ENCODE measurements at regions of chrX and their contacts with region 1.

Region 1: GRCh38 chrX:22135994-22136684 is 104.0 kb downstream of the PHEX start:
- DNase-seq: peak; percentile 79
- H3K4me3 ChIP-seq: peak overlapping the region in 1 of 3 experiments; percentile 15
- H3K27ac ChIP-seq: peak overlapping the region; percentile 94
- H3K4me1 ChIP-seq: peaks cover 37% of the 10 kb centered on the region
- H3K27me3 ChIP-seq: no peaks in the 10 kb centered on the region
- CTCF ChIP-seq: peak; percentile 49 to 72

Region 2: GRCh38 chrX:22073918-22074317 is 62.2 kb before region 1 on chrX:
- CTCF ChIA-PET with region 1: no interaction called
- dilution Hi-C with region 1: loop called (anchors 5 kb)
- in situ Hi-C with region 1: no loop called
- intact Hi-C with region 1: no loop called
- DNase-seq: peak; percentile 73
- H3K4me3 ChIP-seq: no peak overlapping the region
- H3K27ac ChIP-seq: no peak overlapping the region
- H3K4me1 ChIP-seq: peaks cover 8% of the 10 kb centered on the region
- H3K27me3 ChIP-seq: no peaks in the 10 kb centered on the region
- CTCF ChIP-seq: no peak

Region 3: DNA sequence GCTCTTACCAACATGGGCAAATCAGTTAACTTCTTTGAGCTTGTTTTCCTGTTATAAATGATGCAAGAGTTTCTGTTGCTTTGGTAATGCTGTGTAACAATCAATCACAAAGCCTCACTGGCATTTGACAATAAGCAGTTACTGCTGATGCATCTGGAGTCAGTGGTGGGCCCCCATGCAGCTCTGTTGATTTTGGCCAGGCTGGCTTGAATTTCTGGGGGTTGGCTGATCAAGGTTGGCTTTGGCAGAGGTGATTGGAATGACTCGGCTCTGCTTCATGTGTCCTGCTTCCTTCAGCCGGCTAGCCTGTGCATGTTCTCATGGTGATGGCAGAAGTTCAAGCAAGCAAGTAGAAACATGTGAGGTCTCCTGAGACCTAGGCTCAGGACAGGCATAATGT is 13.6 kb before region 1 on chrX:
- CTCF ChIA-PET with region 1: interaction called, 4 read pairs
- dilution Hi-C with region 1: no loop called
- in situ Hi-C with region 1: no loop called
- intact Hi-C with region 1: loop called (anchors 1 kb)
- DNase-seq: peak; percentile 97
- H3K4me3 ChIP-seq: no peak overlapping the region
- H3K27ac ChIP-seq: peak overlapping the region; percentile 91
- H3K4me1 ChIP-seq: peaks cover 54% of the 10 kb centered on the region
- H3K27me3 ChIP-seq: no peaks in the 10 kb centered on the region
- CTCF ChIP-seq: no peak

Region 4: GRCh38 chrX:22278374-22278773 is 142.2 kb after region 1 on chrX:
- CTCF ChIA-PET with region 1: no interaction called
- dilution Hi-C with region 1: no loop called
- in situ Hi-C with region 1: no loop called
- intact Hi-C with region 1: loop called (anchors 1 kb)
- DNase-seq: peak; percentile 19
- H3K4me3 ChIP-seq: no peak overlapping the region
- H3K27ac ChIP-seq: no peak overlapping the region
- H3K4me1 ChIP-seq: no peaks in the 10 kb centered on the region
- H3K27me3 ChIP-seq: no peaks in the 10 kb centered on the region
- CTCF ChIP-seq: peak; percentile 47 to 58

Region 5: GRCh38 chrX:22526339-22526738 is 390.2 kb after region 1 on chrX:
- CTCF ChIA-PET with region 1: no interaction called
- dilution Hi-C with region 1: no loop called
- in situ Hi-C with region 1: no loop called
- intact Hi-C with region 1: loop called (anchors 10 kb)
- DNase-seq: peak; percentile 93
- H3K4me3 ChIP-seq: no peak overlapping the region
- H3K27ac ChIP-seq: peak overlapping the region; percentile 95
- H3K4me1 ChIP-seq: peaks cover 14% of the 10 kb centered on the region
- H3K27me3 ChIP-seq: no peaks in the 10 kb centered on the region
- CTCF ChIP-seq: no peak

Region 6: GRCh38 chrX:22748093-22748999 is 612.2 kb after region 1 on chrX:
- CTCF ChIA-PET with region 1: interaction called, 9 read pairs
- dilution Hi-C with region 1: no loop called
- in situ Hi-C with region 1: no loop called
- intact Hi-C with region 1: loop called (anchors 1 kb)
- DNase-seq: peak; percentile 25
- H3K4me3 ChIP-seq: no peak overlapping the region
- H3K27ac ChIP-seq: no peak overlapping the region
- H3K4me1 ChIP-seq: no peaks in the 10 kb centered on the region
- H3K27me3 ChIP-seq: peaks cover 4% of the 10 kb centered on the region
- CTCF ChIP-seq: peak; percentile 73 to 84

Region 7: GRCh38 chrX:23901805-23902204 is 1765.7 kb after region 1 on chrX:
- CTCF ChIA-PET with region 1: no interaction called
- dilution Hi-C with region 1: no loop called
- in situ Hi-C with region 1: no loop called
- intact Hi-C with region 1: loop called (anchors 5 kb)
- DNase-seq: peak; percentile 72
- H3K4me3 ChIP-seq: no peak overlapping the region
- H3K27ac ChIP-seq: peak overlapping the region; percentile 87
- H3K4me1 ChIP-seq: peaks cover 44% of the 10 kb centered on the region
- H3K27me3 ChIP-seq: no peaks in the 10 kb centered on the region
- CTCF ChIP-seq: peak; percentile 55 to 77